ENCODE measurements at regions of chr1 and their contacts with region 1.

Region 1: GRCh38 chr1:94801919-94802546 is 18.1 kb upstream of the SLC44A3 start:
- DNase-seq: peak; percentile 68
- ATAC-seq: peak; percentile 88
- H3K4me3 ChIP-seq: peak overlapping the region; percentile 36 to 52
- H3K27ac ChIP-seq: peak overlapping the region; percentile 54
- H3K4me1 ChIP-seq: peaks cover 6 to 66% of the 10 kb centered on the region in 2 experiments
- H3K27me3 ChIP-seq: no peaks in the 10 kb centered on the region
- CTCF ChIP-seq: peak; percentile 47 to 95 (median 59)
- POLR2A ChIP-seq: no peak
- RAD21 ChIP-seq: peak; percentile 98

Region 2: DNA sequence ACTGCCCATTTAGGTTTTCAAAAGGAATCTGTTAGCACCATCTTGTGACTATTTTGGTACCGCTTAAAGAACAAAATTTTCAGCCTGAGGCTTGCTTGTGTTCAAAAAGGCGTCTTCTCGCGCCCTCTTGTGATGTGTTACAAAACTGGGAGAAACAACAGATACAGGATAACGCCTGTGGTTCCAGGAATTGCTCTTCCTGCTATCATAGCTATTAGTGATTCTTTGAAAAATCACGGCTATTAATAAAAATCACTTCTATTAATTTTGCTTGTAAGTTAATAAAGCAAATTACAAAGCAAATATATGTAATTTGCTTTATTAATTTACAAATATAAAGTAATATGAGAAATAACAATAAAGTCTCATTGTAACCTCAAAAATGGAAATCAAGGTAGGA is 466.1 kb before region 1 on chr1:
- CTCF ChIA-PET with region 1: no interaction called
- POLR2A ChIA-PET with region 1: no interaction called
- RAD21 ChIA-PET with region 1: no interaction called
- intact Hi-C with region 1: loop called (anchors 2 kb)
- DNase-seq: peak; percentile 93
- ATAC-seq: peak; percentile 89
- H3K4me3 ChIP-seq: no peak overlapping the region
- H3K27ac ChIP-seq: no peak overlapping the region
- H3K4me1 ChIP-seq: peaks cover 15 to 35% of the 10 kb centered on the region in 2 experiments
- H3K27me3 ChIP-seq: no peaks in the 10 kb centered on the region
- CTCF ChIP-seq: peak; percentile 67 to 100 (median 98)
- POLR2A ChIP-seq: no peak
- RAD21 ChIP-seq: peak; percentile 100

Region 3: DNA sequence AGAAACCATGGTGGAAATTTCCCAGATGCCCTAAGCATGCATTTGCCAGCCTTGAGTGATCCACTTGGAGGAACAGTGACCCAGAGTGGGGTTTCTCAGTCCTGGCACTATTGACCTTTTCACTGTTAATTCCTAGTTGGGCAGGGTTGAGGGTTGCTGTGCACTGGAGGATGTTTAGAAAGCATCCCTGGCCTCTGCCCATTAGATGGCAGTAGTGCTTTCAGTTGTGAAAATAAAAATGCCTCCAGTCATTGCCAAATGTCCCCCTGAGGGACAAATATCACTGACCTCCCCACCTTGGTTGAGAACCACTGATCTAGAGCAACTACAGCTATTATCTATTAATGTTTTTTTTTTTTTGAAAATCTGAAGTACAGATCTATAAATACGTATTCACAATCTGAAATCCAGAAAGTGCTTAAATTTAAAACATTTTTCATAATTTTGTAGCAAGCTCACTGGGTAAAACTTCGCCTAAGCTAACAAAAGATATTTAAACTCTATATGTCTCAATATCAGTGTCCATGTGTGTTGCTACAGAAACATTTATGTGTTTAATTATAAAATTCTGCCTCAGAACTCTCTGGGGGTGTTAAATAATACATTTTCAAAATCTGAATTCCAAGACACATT is 287.8 kb before region 1 on chr1:
- CTCF ChIA-PET with region 1: interaction called, 8 read pairs
- POLR2A ChIA-PET with region 1: no interaction called
- RAD21 ChIA-PET with region 1: interaction called in 1 of 2 experiments, 3 read pairs
- intact Hi-C with region 1: loop called (anchors 1 kb)
- DNase-seq: peak; percentile 42
- ATAC-seq: peak; percentile 86
- H3K4me3 ChIP-seq: no peak overlapping the region
- H3K27ac ChIP-seq: no peak overlapping the region
- H3K4me1 ChIP-seq: no peaks in the 10 kb centered on the region
- H3K27me3 ChIP-seq: no peaks in the 10 kb centered on the region
- CTCF ChIP-seq: peak; percentile 63 to 77 (median 74); a peak in 5 of 6 replicates
- POLR2A ChIP-seq: no peak
- RAD21 ChIP-seq: peak; percentile 80

Region 4: DNA sequence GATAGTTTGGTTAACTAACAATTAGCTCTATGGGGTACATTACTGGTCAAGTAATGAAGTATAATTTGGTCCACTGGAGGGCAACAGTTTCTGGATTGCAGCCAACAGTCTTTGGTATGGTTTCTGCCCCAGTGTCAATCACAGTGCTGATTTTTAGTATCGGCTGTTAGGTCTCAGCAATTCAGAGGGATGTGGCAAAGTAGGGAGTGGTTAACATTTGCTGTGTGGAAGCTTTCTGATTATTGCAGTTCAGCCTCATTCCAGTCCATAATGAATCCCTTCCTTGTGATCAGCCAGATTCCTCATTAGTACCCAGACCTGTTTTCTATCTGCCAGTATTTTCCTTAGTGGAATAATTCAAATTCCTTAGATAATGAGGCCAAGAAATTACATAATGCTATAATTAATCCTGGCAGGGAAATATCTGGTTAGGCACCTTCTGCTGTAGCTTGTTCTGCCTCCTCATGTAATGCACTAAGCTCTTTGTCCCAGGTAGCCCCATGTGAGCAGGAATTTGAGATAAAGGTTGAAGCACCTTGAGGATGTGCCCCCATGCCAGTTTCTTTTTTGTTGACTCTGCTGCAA is 274.5 kb before region 1 on chr1:
- CTCF ChIA-PET with region 1: interaction called, 23 read pairs
- POLR2A ChIA-PET with region 1: no interaction called
- RAD21 ChIA-PET with region 1: no interaction called
- intact Hi-C with region 1: loop called (anchors 1 kb)
- DNase-seq: peak; percentile 44
- ATAC-seq: peak; percentile 60
- H3K4me3 ChIP-seq: no peak overlapping the region
- H3K27ac ChIP-seq: peak overlapping the region; percentile 14; the same call in 1 of the 2 replicates
- H3K4me1 ChIP-seq: peaks cover 4 to 23% of the 10 kb centered on the region in 2 experiments; a peak in 3 of 4 replicates
- H3K27me3 ChIP-seq: no peaks in the 10 kb centered on the region
- CTCF ChIP-seq: peak; percentile 5 to 36 (median 34); a peak in 3 of 6 replicates
- POLR2A ChIP-seq: no peak
- RAD21 ChIP-seq: peak; percentile 46

Region 5: DNA sequence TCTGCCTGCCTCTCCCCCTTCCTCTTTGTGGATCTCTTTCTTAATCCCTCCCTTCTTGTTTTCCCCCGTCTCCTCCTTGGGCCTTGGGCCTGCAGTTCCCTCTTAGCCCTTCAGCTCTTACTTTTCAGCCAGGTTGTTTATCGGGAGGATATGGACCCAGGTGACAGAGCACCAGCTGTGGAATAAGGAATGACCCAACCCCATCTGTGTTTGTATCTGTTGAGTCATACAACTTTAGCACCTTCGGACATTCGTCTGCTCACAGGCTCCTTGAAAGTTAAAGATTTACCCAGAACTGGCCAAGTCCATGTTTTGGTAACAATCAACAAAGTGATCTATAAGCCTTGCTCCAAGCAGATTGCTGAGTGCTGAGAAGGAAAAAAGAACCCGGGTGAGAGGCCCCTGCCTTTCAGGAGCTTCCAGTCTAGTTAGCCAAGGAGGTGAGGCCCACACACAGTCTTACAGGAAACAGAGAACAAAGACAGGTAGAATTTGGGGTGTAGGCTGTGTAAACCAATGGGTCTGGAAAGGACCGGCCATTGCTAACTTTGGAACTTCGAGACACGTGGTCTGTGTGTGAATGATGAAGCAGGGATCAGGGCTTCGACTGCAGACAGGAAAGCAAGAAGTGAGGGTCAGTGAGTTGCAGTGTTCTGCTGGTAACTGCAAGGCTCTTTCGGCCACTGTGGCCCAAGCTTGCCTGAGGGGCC is 193.7 kb before region 1 on chr1:
- CTCF ChIA-PET with region 1: interaction called, 5 read pairs
- POLR2A ChIA-PET with region 1: no interaction called
- RAD21 ChIA-PET with region 1: no interaction called
- intact Hi-C with region 1: loop called (anchors 5 kb)
- DNase-seq: no peak
- ATAC-seq: no peak
- H3K4me3 ChIP-seq: no peak overlapping the region
- H3K27ac ChIP-seq: peak overlapping the region; percentile 11; the same call in 1 of the 2 replicates
- H3K4me1 ChIP-seq: peaks cover 26 to 83% of the 10 kb centered on the region in 2 experiments
- H3K27me3 ChIP-seq: no peaks in the 10 kb centered on the region
- CTCF ChIP-seq: no peak
- POLR2A ChIP-seq: no peak
- RAD21 ChIP-seq: no peak

Region 6: GRCh38 chr1:94672934-94673333 is 129.1 kb before region 1 on chr1:
- CTCF ChIA-PET with region 1: no interaction called
- POLR2A ChIA-PET with region 1: no interaction called
- RAD21 ChIA-PET with region 1: no interaction called
- intact Hi-C with region 1: no loop called
- DNase-seq: no peak
- ATAC-seq: no peak
- H3K4me3 ChIP-seq: no peak overlapping the region
- H3K27ac ChIP-seq: no peak overlapping the region
- H3K4me1 ChIP-seq: no peaks in the 10 kb centered on the region; a peak in 1 of 4 replicates
- H3K27me3 ChIP-seq: no peaks in the 10 kb centered on the region
- CTCF ChIP-seq: no peak
- POLR2A ChIP-seq: no peak
- RAD21 ChIP-seq: no peak

Region 7: DNA sequence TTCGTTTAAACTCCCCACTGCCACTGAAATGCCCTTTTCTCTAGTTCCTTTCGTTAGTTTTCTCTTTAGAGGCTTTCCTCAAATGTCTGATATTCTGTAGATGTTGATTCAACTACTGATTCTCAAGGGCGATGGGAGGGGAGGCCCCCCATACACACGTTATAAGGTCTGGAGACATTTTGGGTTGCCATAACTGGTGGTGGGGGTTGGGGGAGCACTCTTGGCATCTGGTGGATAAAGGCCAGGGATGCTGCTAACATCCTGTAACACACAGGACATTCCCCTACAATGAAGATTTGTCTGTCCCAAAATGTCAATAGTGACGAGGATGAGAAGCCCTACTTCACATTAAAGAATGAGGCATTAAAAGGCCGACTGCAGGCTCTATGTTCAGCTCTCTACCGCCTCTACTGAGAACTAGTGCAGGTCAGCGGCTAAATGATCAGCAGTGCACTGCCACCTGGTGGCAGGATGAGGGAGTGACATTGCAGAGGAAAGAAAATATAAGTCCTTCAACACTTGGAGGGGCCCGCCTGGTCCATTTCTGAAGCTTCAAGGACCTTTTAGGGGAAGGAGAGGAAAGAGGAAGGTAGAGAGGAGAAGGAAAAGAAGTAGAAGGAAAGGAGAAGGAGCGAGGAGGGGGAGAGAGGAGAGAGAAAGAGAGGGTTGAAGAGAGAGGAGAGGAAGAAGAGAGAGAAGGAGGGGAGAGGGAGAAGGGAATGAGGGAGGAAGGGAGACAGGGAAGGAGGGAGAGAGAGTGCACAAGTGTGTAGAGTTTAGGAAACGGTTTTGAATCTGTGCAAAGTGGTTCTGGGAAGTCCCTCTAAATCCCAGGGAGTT is 241.3 kb after region 1 on chr1:
- CTCF ChIA-PET with region 1: interaction called, 8 read pairs
- POLR2A ChIA-PET with region 1: no interaction called
- RAD21 ChIA-PET with region 1: no interaction called
- intact Hi-C with region 1: loop called (anchors 2 kb)
- DNase-seq: peak; percentile 73
- ATAC-seq: peak; percentile 87
- H3K4me3 ChIP-seq: no peak overlapping the region
- H3K27ac ChIP-seq: no peak overlapping the region
- H3K4me1 ChIP-seq: peaks cover 3 to 33% of the 10 kb centered on the region in 2 experiments; a peak in 3 of 4 replicates
- H3K27me3 ChIP-seq: no peaks in the 10 kb centered on the region
- CTCF ChIP-seq: peak; percentile 97 to 99 (median 99)
- POLR2A ChIP-seq: no peak
- RAD21 ChIP-seq: peak; percentile 94